K562 (cell line): ENCODE measurements at regions of chr20 and their contacts with region 1.

Region 1: GRCh38 chr20:49179368-49180277 is 8.5 kb downstream of the STAU1 start:
- DNase-seq: no peak
- ATAC-seq: no peak
- H3K4me3 ChIP-seq: no peak overlapping the region
- H3K27ac ChIP-seq: no peak overlapping the region; the same call in 2 of the 3 replicates
- H3K4me1 ChIP-seq: peaks cover 12 to 25% of the 10 kb centered on the region in 2 experiments; a peak in 3 of 5 replicates
- H3K27me3 ChIP-seq: no peaks in the 10 kb centered on the region
- CTCF ChIP-seq: no peak
- EP300 ChIP-seq: no peak
- POLR2A ChIP-seq: no peak
- RAD21 ChIP-seq: no peak

Region 2: DNA sequence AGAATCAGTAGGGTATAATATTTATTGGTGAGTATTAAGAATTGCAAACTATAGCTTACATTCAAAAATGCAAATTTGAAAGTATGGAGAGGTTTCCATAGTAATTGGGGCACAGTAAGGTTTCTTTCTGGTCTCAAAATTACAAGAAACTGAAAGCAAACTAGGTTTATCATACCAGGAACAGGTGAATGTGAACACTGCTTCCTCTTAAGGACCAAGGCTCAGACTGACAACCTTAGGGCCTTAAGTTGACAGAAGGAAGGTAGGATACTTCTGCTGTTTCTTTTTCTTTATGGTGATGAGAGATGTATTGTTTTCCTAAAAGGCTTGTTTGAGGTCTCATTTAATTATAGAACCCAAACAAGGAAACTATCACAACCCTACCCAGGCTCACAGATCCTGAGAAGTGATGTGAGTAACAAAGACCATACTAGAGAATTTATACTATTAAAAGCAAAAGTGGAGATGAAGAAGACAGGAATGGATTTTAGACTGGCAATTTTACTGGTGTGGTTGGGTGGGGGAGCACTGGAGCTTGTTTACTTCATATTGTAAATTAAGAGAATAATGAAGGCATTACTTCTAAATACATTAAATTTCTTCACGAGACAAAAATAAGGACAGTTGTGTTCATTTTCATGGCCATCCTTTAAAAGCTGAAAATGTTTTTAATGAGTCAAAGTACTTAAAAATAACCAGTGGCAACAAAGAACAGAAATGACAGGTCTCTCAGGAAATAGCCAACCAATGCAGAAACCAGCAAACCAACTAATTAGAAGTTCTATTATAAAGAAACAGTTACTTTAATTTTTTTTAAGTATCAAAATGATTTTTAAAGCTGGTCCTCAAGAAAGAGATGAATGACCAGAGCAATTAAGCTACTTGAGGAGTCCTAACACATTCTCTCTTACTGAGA is 12.8 kb before region 1 on chr20:
- CTCF ChIA-PET with region 1: no interaction called
- POLR2A ChIA-PET with region 1: interaction called, 12 read pairs
- in situ Hi-C with region 1: no loop called
- intact Hi-C with region 1: no loop called
- DNase-seq: no peak
- ATAC-seq: no peak
- H3K4me3 ChIP-seq: no peak overlapping the region
- H3K27ac ChIP-seq: no peak overlapping the region
- H3K4me1 ChIP-seq: no peaks in the 10 kb centered on the region
- H3K27me3 ChIP-seq: no peaks in the 10 kb centered on the region
- CTCF ChIP-seq: no peak
- EP300 ChIP-seq: no peak
- POLR2A ChIP-seq: no peak
- RAD21 ChIP-seq: no peak

Region 3: GRCh38 chr20:49268600-49269365 is 89.2 kb after region 1 on chr20:
- CTCF ChIA-PET with region 1: no interaction called
- POLR2A ChIA-PET with region 1: no interaction called
- in situ Hi-C with region 1: no loop called
- intact Hi-C with region 1: no loop called
- DNase-seq: no peak
- ATAC-seq: no peak
- H3K4me3 ChIP-seq: no peak overlapping the region
- H3K27ac ChIP-seq: no peak overlapping the region
- H3K4me1 ChIP-seq: peaks cover 0 to 8% of the 10 kb centered on the region in 2 experiments; a peak in 2 of 5 replicates
- H3K27me3 ChIP-seq: no peaks in the 10 kb centered on the region
- CTCF ChIP-seq: no peak
- EP300 ChIP-seq: no peak
- POLR2A ChIP-seq: no peak
- RAD21 ChIP-seq: no peak

Region 4: DNA sequence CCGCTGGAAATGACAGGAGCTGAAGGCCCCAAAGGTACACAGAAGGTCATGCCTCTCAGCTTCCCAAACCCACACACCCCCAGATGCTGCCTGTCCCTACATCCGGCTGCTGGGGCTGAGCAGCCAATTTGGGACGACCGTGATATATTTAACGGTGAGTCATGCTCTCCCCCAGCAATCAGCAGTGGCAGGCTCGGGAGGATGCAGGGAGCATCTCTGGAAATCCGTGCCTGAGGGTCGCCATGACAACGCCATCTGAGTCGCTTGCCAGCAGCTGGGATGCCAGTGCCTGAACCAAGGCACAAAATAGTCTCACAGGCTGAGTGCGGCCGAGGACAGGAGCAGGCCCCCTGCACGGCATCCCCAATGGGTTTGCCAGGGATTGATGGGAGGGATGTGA is 244.9 kb after region 1 on chr20:
- CTCF ChIA-PET with region 1: no interaction called
- POLR2A ChIA-PET with region 1: no interaction called
- in situ Hi-C with region 1: no loop called
- intact Hi-C with region 1: no loop called
- DNase-seq: peak in 1 of 4 experiments; percentile 7
- ATAC-seq: no peak
- H3K4me3 ChIP-seq: no peak overlapping the region
- H3K27ac ChIP-seq: no peak overlapping the region
- H3K4me1 ChIP-seq: no peaks in the 10 kb centered on the region
- H3K27me3 ChIP-seq: peaks cover 6 to 10% of the 10 kb centered on the region in 2 experiments; a peak in 4 of 5 replicates
- CTCF ChIP-seq: no peak
- EP300 ChIP-seq: no peak
- POLR2A ChIP-seq: no peak
- RAD21 ChIP-seq: no peak